ENCODE measurements at regions of chr1 and their contacts with region 1.

Region 1: DNA sequence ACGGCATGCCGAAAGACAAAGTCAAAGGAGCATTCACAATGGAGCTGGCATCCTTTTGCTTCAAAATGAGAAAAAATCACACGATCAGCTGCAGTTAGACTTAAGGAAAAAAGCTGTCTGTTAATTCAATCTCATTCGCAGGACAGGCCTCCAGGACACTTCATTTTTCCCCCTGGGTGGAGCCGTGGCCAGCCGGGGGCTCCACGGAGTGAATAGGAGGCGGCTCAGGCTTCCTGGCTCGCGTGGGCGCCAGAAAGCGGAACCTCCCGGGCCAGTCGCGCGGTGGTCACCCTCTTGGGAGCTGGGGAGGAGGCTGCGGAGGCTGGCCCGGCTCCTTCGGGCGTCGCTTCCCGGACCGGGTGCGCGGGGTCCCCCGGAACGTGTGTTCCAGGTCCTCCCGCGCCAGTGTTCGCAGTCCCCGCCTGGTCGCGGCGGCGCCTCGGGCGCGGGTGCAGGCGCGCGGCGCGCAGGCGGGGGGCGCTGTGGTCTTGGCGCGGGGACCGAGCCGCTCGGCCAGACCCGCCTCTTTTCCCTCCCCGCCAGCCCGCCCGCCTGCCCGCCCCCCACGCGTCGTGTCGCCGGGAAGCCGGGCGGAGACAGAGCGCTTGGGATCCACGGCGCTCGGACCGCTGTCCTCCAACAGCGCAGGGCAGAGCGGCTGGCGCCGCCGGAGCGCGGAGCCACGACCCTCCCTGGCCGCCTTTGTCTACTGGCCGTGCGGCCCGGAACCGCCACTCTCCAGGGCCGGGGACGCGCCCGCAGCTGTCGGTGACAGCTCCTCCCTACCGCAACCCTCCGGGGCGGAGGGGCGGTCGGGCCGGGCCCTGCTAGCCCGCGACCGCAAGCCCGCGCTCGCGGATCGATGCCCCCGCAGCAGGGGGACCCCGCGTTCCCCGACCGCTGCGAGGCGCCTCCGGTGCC is at the start of gene RHOU:
- DNase-seq: peak; percentile 89 to 90 (median 89)
- ATAC-seq: peak; percentile 80 to 92 (median 89)
- H3K4me3 ChIP-seq: peak within 1 kb of the TSS; percentile 83 to 85 (median 85)
- H3K27ac ChIP-seq: peak within 1 kb of the TSS; percentile 98 to 100 (median 99)
- H3K4me1 ChIP-seq: peaks cover 0 to 22% (median 8%) of the 10 kb centered on the region in 4 donors
- H3K27me3 ChIP-seq: no peaks in the 10 kb centered on the region
- CTCF ChIP-seq: peak; percentile 77 to 99 (median 92)
- POLR2A ChIP-seq: peak; percentile 95
- total RNA-seq, gene RHOU: 16.6 to 22.2 (median 19.6) TPM

Region 2: DNA sequence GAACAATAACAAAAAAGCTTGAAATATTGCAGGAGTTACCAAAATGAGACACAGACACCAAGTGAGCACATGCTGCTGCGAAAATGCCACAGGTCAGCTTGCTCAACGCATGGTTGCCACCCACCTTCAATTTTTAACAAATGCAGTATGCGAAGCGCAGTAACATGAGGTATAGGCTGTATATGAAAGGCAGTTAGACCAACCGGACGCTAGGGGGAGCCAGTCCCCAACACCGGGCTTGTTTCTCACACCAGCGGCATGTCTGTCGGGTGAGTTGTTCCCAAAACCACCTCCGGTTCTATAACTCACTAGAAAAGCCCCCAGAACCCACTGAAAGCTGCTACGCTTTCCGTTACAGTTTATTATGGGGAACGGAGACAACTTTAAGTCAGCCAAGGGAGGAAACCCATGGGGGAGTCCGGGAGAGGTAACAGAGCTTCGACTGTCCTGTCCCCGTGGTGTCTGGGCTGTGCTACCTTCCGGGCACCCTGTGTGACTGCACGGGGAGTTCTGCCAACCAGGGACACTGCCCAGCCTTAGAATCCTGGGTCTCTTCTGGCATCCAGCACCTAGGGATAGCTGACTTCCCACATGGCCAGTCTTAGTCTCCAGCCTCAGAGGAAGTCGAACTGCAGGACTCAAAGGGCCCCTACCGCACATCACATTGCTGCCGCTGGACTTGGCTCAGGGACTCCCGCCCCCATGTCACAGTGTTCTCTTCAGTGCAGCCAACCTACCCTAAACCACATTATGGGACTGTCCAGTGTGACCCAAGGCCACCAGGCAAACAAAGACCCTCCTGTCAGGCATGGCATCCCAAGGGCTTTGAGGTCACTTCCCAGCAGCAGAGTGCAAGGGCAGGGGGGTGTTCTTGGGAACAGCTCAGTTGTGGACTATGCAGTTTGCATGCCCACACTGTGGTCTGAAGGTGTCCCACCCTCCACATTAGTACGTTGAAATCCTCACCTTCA is 234.0 kb before region 1 on chr1:
- intact Hi-C with region 1: no loop called
- DNase-seq: peak; percentile 77 to 80 (median 77)
- ATAC-seq: peak; percentile 93 to 99 (median 98)
- H3K4me3 ChIP-seq: no peak overlapping the region
- H3K27ac ChIP-seq: no peak overlapping the region
- H3K4me1 ChIP-seq: no peaks in the 10 kb centered on the region
- H3K27me3 ChIP-seq: no peaks in the 10 kb centered on the region
- CTCF ChIP-seq: peak; percentile 72 to 96 (median 91)
- POLR2A ChIP-seq: no peak

Region 3: DNA sequence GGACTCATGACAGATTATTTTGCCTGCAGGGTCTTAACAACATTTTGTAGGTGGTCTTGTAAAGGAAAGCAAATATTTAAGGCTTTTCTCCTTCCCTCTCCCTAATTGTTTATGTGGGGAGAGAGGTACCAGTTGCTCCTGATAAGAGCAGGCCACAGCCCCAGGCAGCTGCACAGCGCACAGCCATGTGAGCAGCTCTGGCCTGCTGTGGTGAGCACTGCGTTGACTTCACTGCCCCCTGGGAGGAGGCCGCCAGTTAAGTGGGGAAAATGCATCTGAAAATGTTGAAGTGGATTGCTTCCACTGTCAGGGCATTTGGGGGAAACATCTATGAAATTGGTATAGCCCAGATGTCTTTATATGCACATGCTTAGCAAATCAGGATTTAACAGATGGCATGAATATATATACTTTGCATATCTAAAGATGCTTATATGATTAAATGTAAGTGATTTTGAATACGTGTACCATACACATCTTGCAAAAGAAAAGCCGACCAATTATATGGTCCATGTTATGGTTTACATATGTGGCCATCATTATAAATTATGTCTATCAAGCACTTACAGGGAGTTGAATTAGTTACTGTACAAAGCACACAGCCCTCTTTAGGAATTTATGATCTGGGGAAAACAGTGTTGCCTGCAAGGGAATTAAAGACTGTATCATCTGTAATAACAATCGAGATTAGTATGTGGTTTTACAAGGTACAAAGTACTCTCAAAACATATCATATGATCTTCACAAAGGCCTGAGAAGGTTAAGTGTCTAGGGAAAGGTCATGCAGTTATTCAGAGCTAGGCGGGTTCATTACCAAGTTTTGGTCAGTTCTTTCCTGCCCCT is 132.2 kb after region 1 on chr1:
- intact Hi-C with region 1: no loop called
- DNase-seq: no peak
- ATAC-seq: no peak
- H3K4me3 ChIP-seq: no peak overlapping the region
- H3K27ac ChIP-seq: no peak overlapping the region
- H3K4me1 ChIP-seq: peaks cover 0 to 27% (median 10%) of the 10 kb centered on the region in 4 donors
- H3K27me3 ChIP-seq: no peaks in the 10 kb centered on the region
- CTCF ChIP-seq: no peak
- POLR2A ChIP-seq: no peak

Region 4: DNA sequence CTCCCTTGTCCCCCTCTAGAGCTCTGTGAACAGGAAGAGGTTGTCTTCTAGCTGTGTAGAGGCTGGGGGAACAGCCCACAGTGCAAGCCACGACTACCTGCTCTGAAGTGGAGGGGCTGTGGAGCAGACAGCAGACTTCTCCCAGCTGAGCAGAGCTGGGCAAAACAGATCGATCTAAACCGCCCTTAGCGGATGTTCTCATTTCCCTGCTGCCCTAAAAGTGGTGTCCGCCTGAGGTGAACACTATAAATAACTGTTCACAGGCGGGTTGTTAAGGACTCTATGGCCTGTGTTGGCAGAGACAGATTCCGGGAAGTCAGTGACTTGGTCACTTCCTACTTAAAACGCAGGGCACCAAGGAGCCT is 203.4 kb after region 1 on chr1:
- intact Hi-C with region 1: no loop called
- DNase-seq: no peak
- ATAC-seq: peak; percentile 63 to 73 (median 68)
- H3K4me3 ChIP-seq: no peak overlapping the region
- H3K27ac ChIP-seq: peak overlapping the region; percentile 49 to 66 (median 56)
- H3K4me1 ChIP-seq: peaks cover 0 to 41% (median 19%) of the 10 kb centered on the region in 4 donors
- H3K27me3 ChIP-seq: no peaks in the 10 kb centered on the region
- CTCF ChIP-seq: no peak
- POLR2A ChIP-seq: no peak

Region 5: DNA sequence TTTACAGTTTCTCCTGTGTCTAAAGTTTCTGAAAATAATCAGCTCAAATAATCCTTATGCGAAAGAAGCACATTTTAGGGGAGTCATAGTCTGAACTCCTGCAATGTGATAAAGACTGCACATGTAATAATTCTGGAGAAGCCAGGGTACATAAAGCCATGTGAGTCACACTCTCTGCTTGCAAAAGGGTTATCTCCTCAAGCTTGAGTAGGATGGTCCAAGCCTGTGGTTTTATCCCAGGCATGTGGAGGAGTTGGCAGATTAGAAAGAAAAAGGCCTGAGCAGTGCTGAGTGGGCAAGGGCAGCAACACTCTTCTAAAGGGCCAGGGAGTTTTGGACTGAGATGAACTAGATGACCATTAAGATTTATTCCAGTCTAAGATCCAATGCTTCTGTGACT is 220.6 kb after region 1 on chr1:
- intact Hi-C with region 1: no loop called
- DNase-seq: peak in 1 of 3 donors; percentile 7
- ATAC-seq: no peak
- H3K4me3 ChIP-seq: no peak overlapping the region
- H3K27ac ChIP-seq: no peak overlapping the region
- H3K4me1 ChIP-seq: no peaks in the 10 kb centered on the region
- H3K27me3 ChIP-seq: no peaks in the 10 kb centered on the region
- CTCF ChIP-seq: no peak
- POLR2A ChIP-seq: no peak

Region 6: DNA sequence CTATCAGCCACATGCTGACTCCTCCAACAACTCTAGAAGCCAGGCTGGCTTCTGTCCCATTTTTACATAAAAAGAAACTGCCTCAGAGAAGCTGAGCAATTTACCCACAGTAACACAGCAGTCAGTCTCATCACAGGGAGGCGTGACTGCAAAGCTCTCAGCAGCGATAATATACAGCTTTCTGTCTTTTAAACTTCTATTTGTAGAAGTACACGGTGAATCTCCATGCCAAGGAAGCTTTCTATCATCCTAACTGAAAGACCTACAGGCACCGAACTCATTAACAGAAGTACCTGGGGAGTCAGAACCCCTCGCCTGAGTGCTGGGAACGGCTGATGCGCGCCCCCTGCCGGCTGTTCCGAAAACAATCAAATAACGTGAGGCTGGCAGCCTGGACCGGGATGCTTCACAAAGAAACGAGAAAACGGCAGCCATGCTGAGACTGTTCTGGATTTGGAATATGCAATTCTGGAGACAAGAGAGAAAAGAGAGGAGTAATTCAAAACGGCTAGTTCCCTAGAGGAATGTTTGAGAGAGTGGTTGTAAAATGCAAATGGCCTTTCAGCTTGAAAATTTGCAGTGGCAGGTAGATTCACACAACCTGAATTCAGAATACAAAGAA is 492.3 kb after region 1 on chr1:
- intact Hi-C with region 1: loop called in 1 of 2 experiments (anchors 10 kb)
- DNase-seq: peak; percentile 81 to 88 (median 86)
- ATAC-seq: peak; percentile 51 to 65 (median 58)
- H3K4me3 ChIP-seq: no peak overlapping the region
- H3K27ac ChIP-seq: peak overlapping the region in 1 of 3 donors; percentile 14
- H3K4me1 ChIP-seq: peaks cover 0 to 46% (median 23%) of the 10 kb centered on the region in 4 donors
- H3K27me3 ChIP-seq: no peaks in the 10 kb centered on the region
- CTCF ChIP-seq: peak; percentile 82 to 92 (median 86)
- POLR2A ChIP-seq: no peak

Measured in right lobe of liver (tissue), 6 donors.